ENCODE measurements at regions of chr16 and their contacts with region 1.

Region 1: DNA sequence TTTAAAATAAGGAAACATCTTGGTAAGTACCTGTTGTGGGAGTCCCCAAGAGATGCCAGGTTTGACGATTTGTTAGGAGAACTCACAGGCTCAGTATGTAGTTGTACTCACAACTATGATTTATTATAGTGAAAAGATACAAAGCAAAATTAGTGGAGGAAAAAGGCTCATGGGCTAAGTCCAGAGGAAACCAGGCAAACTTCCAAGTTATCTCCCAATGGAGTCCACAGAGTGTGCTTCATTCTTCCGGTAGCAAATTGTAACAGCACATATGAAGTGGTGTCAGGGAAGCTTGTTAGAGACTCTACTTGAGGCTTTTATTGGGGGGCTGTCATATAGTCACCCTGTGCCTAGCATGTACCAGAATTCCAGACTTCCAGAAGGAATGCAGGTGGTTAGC is 2.3 kb downstream of the DDX19A start:
- DNase-seq: no peak
- H3K4me3 ChIP-seq: no peak overlapping the region
- H3K27ac ChIP-seq: no peak overlapping the region
- H3K4me1 ChIP-seq: peaks cover 0 to 33% (median 19%) of the 10 kb centered on the region in 4 donors
- H3K27me3 ChIP-seq: no peaks in the 10 kb centered on the region
- CTCF ChIP-seq: no peak

Region 2: DNA sequence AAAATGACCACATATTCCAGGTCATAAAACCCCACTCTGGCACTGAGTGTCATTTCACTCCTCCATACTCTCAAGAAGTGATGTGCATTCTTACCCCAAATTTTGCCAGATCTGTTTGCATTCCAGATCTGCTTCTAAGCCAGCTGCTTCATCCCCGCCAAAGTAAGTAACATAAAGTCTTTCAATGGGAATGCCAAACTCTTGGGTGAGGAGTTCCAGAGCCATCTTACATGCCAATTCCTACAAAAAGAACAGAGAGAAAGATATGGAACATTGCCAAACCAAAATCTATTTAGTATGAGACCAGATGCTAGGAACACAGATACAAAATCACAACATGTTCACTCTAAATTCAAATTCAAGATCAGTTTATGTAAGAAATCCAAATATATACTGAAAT is 72.6 kb before region 1 on chr16:
- intact Hi-C with region 1: no loop called
- DNase-seq: no peak
- H3K4me3 ChIP-seq: no peak overlapping the region
- H3K27ac ChIP-seq: no peak overlapping the region
- H3K4me1 ChIP-seq: no peaks in the 10 kb centered on the region
- H3K27me3 ChIP-seq: no peaks in the 10 kb centered on the region
- CTCF ChIP-seq: no peak

Region 3: GRCh38 chr16:70304892-70305448 is 44.0 kb before region 1 on chr16:
- intact Hi-C with region 1: loop called (anchors 5 kb)
- DNase-seq: no peak
- H3K4me3 ChIP-seq: no peak overlapping the region
- H3K27ac ChIP-seq: no peak overlapping the region
- H3K4me1 ChIP-seq: peaks cover 0 to 3% (median under 1%) of the 10 kb centered on the region in 4 donors
- H3K27me3 ChIP-seq: no peaks in the 10 kb centered on the region
- CTCF ChIP-seq: no peak

Region 4: DNA sequence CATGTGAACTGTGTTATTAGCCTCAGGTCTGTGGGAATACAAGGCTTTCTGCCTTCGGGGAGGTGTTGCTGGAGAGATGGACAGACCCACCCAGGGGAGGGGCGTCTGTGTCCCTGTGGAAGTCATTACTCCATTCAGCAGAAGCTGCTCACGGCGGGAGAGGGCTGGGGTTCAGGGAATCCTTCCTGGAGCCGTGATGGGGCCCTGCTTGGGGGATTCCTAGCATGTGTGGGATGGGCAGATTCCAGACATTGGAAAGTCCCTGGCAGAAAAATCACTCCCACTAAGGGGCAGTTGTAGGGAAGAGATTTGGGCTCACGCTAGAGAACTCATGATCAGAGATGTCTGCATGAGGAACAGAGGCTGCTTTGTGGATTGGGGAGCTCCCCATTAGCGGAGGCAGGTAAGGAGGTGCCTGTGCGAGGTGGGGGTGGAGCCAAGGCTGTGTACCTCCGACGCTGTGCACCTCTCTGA is 241.0 kb after region 1 on chr16:
- intact Hi-C with region 1: no loop called
- DNase-seq: peak in 1 of 2 donors; percentile 44
- H3K4me3 ChIP-seq: peak overlapping the region in 1 of 2 donors; percentile 15
- H3K27ac ChIP-seq: peak overlapping the region; percentile 92 to 95
- H3K4me1 ChIP-seq: peaks cover 5 to 73% (median 48%) of the 10 kb centered on the region in 4 donors
- H3K27me3 ChIP-seq: no peaks in the 10 kb centered on the region
- CTCF ChIP-seq: no peak